Ascending aorta (tissue), 2 donors: ENCODE measurements at regions of chr11 and their contacts with region 1.

Region 1: GRCh38 chr11:11426226-11426952 is 73.3 kb upstream of the CSNK2A3 start:
- DNase-seq: no peak
- H3K4me3 ChIP-seq: no peak overlapping the region
- H3K27ac ChIP-seq: peak overlapping the region in 1 of 2 donors; percentile 41
- H3K4me1 ChIP-seq: peaks cover 0 to 5% of the 10 kb centered on the region in 2 donors
- H3K27me3 ChIP-seq: no peaks in the 10 kb centered on the region
- CTCF ChIP-seq: no peak

Region 2: GRCh38 chr11:11202885-11203284 is 223.5 kb before region 1 on chr11:
- intact Hi-C with region 1: no loop called
- DNase-seq: no peak
- H3K4me3 ChIP-seq: no peak overlapping the region
- H3K27ac ChIP-seq: no peak overlapping the region
- H3K4me1 ChIP-seq: no peaks in the 10 kb centered on the region
- H3K27me3 ChIP-seq: no peaks in the 10 kb centered on the region
- CTCF ChIP-seq: no peak

Region 3: DNA sequence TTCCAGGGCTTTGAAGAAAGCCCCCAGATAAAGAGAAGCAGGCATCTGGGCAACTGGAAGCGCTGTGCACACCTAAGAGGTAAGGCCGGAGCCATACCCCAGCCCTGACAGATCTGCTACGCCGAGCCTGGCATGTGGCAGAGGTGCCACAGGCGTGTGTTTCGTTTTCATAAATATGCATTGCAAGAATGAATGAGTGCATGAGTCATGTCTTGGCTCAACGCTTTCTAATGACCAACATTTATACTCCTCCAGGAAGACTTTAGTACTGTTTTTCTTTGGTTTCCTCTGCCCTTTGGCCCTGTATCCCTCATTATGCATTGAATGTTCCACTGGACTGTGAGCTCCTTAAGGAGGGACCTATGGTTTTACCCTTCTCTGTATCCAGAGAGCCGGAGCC is 34.6 kb before region 1 on chr11:
- intact Hi-C with region 1: loop called (anchors 5 kb)
- DNase-seq: peak in 1 of 2 donors; percentile 81
- H3K4me3 ChIP-seq: peak overlapping the region; percentile 8 to 39
- H3K27ac ChIP-seq: peak overlapping the region; percentile 63 to 71
- H3K4me1 ChIP-seq: peaks cover 0 to 13% of the 10 kb centered on the region in 2 donors
- H3K27me3 ChIP-seq: no peaks in the 10 kb centered on the region
- CTCF ChIP-seq: no peak